AG04450 (cell line): ENCODE measurements at regions of chr15 and their contacts with region 1.

Region 1: GRCh38 chr15:99282121-99282520 is 30.8 kb downstream of the LRRC28 start:
- DNase-seq: no peak
- H3K4me3 ChIP-seq: no peak overlapping the region
- H3K27ac ChIP-seq: no peak overlapping the region
- H3K27me3 ChIP-seq: no peaks in the 10 kb centered on the region
- CTCF ChIP-seq: no peak

Region 2: DNA sequence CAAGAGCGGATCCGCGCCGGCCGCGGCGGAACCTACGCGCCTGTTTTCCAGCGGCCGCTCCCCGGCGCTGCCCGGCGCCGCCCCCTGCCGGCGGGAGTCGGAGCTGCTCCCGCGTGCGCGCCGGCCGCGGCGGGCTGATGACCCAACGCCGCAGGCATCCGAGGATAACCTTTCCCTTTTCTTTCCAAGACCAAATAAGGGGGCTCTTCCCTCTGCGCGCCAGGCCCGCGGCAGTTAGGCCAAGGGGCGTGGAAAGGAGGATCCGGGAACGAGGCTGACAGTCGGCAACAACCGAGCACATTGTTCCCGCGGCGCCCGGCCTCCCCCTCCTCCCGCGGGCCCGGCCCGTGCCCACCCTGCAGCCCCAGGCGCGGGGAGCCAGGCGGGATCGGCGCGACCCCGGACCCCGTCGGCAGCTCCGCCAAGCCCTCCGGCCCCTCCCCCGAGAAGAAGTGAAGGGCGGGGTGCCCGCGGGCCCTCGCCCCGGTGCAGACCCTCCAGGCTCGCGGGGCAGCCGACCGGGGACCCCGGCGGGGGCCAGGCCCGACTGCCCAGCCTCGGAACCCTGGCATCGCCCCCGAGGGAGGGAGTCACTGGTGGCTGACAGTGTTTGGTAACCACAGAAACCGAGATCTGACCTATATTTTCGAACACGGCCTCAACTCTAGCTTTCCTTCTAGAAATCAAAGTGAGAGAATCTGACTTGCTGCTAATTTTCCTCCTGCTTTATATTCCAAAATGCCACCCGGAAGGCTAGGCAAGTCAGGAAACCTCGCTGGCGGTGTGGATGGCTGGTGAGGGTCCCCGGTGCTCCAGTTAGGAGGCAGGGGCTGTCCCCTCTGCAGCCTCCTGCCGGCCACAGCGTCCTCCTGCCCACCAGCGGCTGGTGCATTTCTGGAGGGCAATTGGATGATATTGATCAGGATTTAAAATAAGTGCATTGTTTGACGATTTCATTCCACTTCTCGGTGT is 222.8 kb before region 1 on chr15:
- CTCF ChIA-PET with region 1: no interaction called
- POLR2A ChIA-PET with region 1: no interaction called
- DNase-seq: peak; percentile 77
- H3K4me3 ChIP-seq: peak overlapping the region; percentile 57
- H3K27ac ChIP-seq: peak overlapping the region; percentile 52
- H3K27me3 ChIP-seq: no peaks in the 10 kb centered on the region
- CTCF ChIP-seq: peak; percentile 50

Region 3: GRCh38 chr15:99187936-99188335 is 94.2 kb before region 1 on chr15:
- CTCF ChIA-PET with region 1: no interaction called
- POLR2A ChIA-PET with region 1: no interaction called
- DNase-seq: no peak
- H3K4me3 ChIP-seq: no peak overlapping the region
- H3K27ac ChIP-seq: no peak overlapping the region
- H3K27me3 ChIP-seq: no peaks in the 10 kb centered on the region
- CTCF ChIP-seq: no peak

Region 4: DNA sequence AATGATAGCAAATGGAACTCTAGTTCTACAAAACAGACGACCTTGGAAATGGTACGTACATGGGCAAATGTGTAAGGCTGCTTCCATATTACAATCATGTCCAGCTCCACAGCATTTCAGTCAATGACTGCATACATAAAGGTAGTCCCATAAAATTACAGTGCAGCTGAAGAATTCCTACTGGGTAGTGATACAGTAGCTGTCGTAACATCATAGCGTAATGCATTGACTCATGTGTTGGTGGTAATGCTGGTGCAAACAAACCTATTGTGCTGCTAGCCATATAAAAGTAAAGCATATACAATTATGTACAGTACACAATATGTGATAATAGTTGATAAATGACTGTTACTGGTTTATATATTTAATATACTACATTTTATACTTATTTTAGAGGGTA is 51.3 kb before region 1 on chr15:
- CTCF ChIA-PET with region 1: no interaction called
- POLR2A ChIA-PET with region 1: no interaction called
- DNase-seq: no peak
- H3K4me3 ChIP-seq: no peak overlapping the region
- H3K27ac ChIP-seq: no peak overlapping the region
- H3K27me3 ChIP-seq: no peaks in the 10 kb centered on the region
- CTCF ChIP-seq: no peak

Region 5: DNA sequence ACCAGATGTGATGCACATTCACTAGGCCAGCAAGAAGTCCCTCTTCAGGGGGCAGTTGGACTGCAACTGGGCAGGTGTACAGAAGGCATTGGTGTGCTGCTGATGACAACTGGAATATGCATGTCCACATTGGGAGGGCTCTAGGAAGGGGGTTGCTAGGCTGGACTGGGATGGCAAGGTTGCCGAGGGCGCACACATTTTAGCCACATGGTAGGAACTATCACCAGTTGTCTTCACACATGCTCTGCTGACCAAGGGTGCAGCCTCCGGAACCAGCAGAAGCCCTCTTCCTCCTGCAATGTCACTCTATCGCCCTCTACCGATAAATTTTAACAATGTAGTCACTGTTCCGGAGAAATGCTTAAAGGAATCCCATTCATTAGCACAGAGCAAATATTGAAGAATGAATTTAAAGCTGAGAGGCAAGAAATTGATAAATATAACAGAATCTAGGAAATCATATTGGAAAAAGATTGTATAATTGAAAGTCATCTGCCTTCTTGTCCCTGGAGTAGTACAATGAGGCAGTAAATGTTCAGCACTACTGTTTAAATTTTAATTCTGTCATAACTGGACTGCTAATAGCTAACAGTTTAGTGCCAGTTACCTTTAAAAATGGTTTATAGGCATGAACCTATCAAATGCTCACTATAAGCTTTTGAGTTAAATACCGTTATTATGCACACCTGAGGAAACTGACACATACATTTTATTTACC is 473.7 kb after region 1 on chr15:
- CTCF ChIA-PET with region 1: interaction called, 176 read pairs
- POLR2A ChIA-PET with region 1: no interaction called
- DNase-seq: peak; percentile 18
- H3K4me3 ChIP-seq: no peak overlapping the region
- H3K27ac ChIP-seq: no peak overlapping the region
- H3K27me3 ChIP-seq: peaks cover 4% of the 10 kb centered on the region
- CTCF ChIP-seq: peak; percentile 89